ENCODE measurements at regions of chr1 and their contacts with region 1.

Region 1: DNA sequence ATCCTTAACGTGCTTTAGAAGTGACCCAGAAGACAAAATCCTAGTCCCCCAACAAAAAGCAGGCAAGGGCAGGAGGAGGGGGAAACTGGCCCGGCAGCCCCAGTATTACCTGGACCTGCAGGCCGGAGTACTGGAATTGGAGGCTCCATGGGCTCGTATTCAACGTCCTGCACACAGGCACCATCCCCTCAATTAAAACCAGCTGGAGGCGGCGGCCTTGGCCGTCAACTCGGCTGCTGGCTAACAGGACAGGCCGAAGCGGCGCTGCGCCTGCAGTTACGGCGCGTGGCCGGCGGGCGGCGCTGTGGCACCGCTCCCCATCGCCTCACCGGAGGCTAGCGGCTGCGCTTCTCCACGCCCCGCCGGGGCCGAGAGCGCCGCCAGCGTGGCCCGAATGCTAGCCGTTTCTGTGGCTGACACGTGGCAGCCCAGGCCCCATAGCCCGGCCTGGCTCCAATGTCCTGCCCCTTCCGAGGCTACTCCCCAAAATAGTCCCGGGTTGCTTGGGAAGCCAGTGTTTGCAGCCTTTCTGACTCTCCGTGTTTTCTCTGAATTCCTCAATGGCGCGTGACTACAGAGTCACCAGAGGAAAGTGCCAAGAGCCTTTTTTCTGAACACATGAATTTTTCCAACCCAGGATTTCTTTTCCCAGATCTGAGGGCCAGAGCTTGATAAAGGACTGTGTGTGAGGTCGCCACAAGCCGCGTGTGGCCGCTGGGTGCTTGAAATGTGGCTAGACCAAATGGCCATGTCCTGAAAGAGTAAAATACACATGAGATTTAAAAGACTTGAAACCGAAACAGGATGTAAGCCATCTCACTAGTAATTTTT is 82.5 kb downstream of the HHIPL2 start:
- DNase-seq: peak; percentile 53
- H3K4me3 ChIP-seq: peak overlapping the region; percentile 21 to 58 (median 45)
- H3K27ac ChIP-seq: peak overlapping the region; percentile 46 to 82 (median 78)
- H3K4me1 ChIP-seq: peaks cover 4 to 20% (median 5%) of the 10 kb centered on the region in 3 donors
- H3K27me3 ChIP-seq: no peaks in the 10 kb centered on the region
- CTCF ChIP-seq: peak; percentile 99 to 100 (median 100)
- POLR2A ChIP-seq: peak in 1 of 4 donors; percentile 23

Region 2: GRCh38 chr1:222334026-222334680 is 131.3 kb before region 1 on chr1:
- intact Hi-C with region 1: no loop called
- DNase-seq: no peak
- H3K4me3 ChIP-seq: no peak overlapping the region
- H3K27ac ChIP-seq: no peak overlapping the region
- H3K4me1 ChIP-seq: no peaks in the 10 kb centered on the region
- H3K27me3 ChIP-seq: no peaks in the 10 kb centered on the region
- CTCF ChIP-seq: no peak
- POLR2A ChIP-seq: no peak

Region 3: GRCh38 chr1:222404710-222405109 is 60.7 kb before region 1 on chr1:
- intact Hi-C with region 1: no loop called
- DNase-seq: no peak
- H3K4me3 ChIP-seq: no peak overlapping the region
- H3K27ac ChIP-seq: no peak overlapping the region
- H3K4me1 ChIP-seq: no peaks in the 10 kb centered on the region
- H3K27me3 ChIP-seq: no peaks in the 10 kb centered on the region
- CTCF ChIP-seq: no peak
- POLR2A ChIP-seq: no peak

Region 4: DNA sequence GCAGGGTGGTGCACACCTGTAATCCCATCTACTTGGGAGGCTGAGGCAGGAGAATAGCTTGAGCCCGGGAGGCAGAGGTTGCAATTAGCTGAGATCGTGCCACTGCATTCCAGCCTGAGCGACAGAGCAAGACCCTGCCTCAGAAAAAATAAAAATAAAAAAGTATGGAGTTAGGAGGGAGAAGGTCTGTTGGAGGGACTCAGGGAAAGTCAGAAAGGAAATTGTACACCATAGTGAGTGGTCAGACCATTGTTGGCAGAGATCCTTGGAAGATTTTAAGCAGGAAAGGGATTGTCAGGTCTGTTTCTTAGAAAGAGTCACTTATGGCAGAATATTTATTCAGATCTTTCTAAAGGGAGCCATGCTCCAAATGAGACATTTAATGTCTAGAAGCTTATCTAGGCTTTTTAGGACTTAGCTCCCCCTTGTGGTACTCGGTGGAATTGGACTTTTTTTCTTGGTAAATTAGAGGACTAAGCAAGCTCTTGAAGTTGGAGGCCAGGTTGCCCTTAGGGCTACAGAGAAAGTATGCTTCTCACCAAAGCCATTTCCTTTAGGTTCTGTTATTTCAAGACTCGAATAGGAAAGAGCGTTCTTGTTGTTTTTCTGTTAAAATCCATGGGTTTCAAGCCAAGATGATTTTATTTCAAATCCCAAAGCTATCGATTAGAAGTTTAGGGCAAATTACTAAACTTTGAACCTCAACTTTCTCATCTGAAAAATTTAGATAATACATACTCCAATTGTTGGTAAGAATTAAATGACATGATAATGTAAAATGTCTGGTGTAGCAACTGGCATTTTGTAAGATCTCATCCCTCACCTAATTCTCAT is 169.0 kb after region 1 on chr1:
- intact Hi-C with region 1: loop called (anchors 5 kb)
- DNase-seq: no peak
- H3K4me3 ChIP-seq: no peak overlapping the region
- H3K27ac ChIP-seq: no peak overlapping the region
- H3K4me1 ChIP-seq: no peaks in the 10 kb centered on the region
- H3K27me3 ChIP-seq: no peaks in the 10 kb centered on the region
- CTCF ChIP-seq: peak; percentile 80 to 90 (median 86)
- POLR2A ChIP-seq: no peak

Region 5: DNA sequence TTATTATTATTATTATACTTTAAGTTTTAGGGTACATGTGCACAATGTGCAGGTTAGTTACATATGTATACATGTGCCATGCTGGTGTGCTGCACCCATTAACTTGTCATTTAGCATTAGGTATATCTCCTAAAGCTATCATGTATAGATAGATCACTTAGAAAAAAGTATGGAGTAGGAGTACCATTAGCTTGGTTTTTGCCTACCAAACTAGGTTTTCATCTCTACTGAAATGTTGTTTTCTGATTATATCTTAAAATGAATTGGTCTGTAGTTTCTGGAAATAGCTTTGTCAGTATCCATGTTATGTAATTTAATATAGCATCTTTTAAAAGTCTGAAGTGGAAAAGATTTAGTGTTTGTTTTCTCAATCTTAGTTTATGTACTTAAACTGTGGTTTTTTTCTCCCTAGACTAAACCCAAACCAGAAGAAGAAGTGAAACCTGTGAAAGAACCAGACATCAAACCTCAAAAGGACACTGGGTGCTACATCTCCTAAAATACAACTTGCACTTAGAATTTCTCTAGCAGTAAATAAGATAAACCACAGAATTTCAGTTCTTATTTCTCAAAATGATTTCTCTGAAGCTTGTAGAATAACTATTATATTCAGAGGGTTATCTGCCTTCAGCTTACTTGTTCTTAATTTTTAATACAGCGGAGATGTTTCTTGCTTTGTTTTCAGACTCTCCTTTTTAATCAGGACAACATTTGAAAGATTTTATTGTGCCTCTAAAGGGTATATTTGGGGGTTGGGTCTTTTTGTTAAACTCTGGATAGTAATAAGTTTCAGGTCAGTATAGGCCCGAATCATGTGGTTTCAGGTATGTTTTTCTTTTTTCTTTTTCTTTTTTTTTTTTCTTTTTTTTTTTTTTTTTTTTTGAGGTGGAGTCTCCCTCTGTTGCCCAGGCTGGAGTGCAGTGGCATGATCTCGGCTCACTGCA is 267.1 kb after region 1 on chr1:
- intact Hi-C with region 1: no loop called
- DNase-seq: no peak
- H3K4me3 ChIP-seq: no peak overlapping the region
- H3K27ac ChIP-seq: no peak overlapping the region
- H3K4me1 ChIP-seq: peaks cover 0 to 13% (median 0%) of the 10 kb centered on the region in 3 donors
- H3K27me3 ChIP-seq: no peaks in the 10 kb centered on the region
- CTCF ChIP-seq: no peak
- POLR2A ChIP-seq: no peak

Measured in esophagus squamous epithelium (tissue), 5 donors.